IMR-90 (cell line): ENCODE measurements at regions of chr2 and their contacts with region 1.

Region 1: GRCh38 chr2:42706836-42707235 is 57.1 kb downstream of the OXER1 start:
- DNase-seq: no peak
- ATAC-seq: peak; percentile 57
- H3K4me3 ChIP-seq: no peak overlapping the region
- H3K27ac ChIP-seq: no peak overlapping the region
- H3K4me1 ChIP-seq: peaks cover 2% of the 10 kb centered on the region; the same call in 1 of the 2 replicates
- H3K27me3 ChIP-seq: no peaks in the 10 kb centered on the region
- CTCF ChIP-seq: no peak
- POLR2A ChIP-seq: no peak
- RAD21 ChIP-seq: no peak

Region 2: DNA sequence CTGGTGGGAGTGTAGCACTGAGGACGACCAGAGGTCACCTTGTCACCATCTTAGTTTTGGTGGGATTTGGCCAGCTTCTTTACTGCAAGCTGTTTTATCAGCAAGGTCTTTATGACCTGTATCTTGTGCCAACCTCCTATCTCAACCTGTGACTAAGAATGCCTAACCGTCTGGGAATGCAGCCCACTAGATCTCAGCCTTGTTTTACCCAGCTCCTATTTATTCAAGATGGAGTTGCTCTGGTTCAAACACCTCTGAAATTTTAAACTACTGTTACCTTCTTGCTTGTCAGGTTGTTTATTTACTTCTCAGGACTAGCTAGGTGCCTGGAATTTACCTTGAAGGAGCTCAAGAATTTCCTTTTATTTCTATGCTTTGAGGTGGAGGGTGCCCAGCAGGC is 203.5 kb before region 1 on chr2:
- CTCF ChIA-PET with region 1: no interaction called
- POLR2A ChIA-PET with region 1: no interaction called
- dilution Hi-C with region 1: no loop called
- in situ Hi-C with region 1: no loop called
- intact Hi-C with region 1: no loop called
- DNase-seq: no peak
- ATAC-seq: no peak
- H3K4me3 ChIP-seq: no peak overlapping the region
- H3K27ac ChIP-seq: no peak overlapping the region
- H3K4me1 ChIP-seq: no peaks in the 10 kb centered on the region
- H3K27me3 ChIP-seq: peaks cover 3% of the 10 kb centered on the region
- CTCF ChIP-seq: no peak
- POLR2A ChIP-seq: no peak
- RAD21 ChIP-seq: no peak

Region 3: GRCh38 chr2:42804338-42804737 is 97.5 kb after region 1 on chr2:
- CTCF ChIA-PET with region 1: no interaction called
- POLR2A ChIA-PET with region 1: no interaction called
- dilution Hi-C with region 1: no loop called
- in situ Hi-C with region 1: no loop called
- intact Hi-C with region 1: loop called (anchors 5 kb)
- DNase-seq: peak; percentile 65
- ATAC-seq: peak; percentile 19
- H3K4me3 ChIP-seq: no peak overlapping the region
- H3K27ac ChIP-seq: no peak overlapping the region
- H3K4me1 ChIP-seq: peaks cover 13% of the 10 kb centered on the region
- H3K27me3 ChIP-seq: peaks cover 5% of the 10 kb centered on the region; the same call in 1 of the 2 replicates
- CTCF ChIP-seq: no peak
- POLR2A ChIP-seq: no peak
- RAD21 ChIP-seq: no peak